Panc1 (cell line): ENCODE measurements at regions of chr1 and their contacts with region 1.

Region 1: DNA sequence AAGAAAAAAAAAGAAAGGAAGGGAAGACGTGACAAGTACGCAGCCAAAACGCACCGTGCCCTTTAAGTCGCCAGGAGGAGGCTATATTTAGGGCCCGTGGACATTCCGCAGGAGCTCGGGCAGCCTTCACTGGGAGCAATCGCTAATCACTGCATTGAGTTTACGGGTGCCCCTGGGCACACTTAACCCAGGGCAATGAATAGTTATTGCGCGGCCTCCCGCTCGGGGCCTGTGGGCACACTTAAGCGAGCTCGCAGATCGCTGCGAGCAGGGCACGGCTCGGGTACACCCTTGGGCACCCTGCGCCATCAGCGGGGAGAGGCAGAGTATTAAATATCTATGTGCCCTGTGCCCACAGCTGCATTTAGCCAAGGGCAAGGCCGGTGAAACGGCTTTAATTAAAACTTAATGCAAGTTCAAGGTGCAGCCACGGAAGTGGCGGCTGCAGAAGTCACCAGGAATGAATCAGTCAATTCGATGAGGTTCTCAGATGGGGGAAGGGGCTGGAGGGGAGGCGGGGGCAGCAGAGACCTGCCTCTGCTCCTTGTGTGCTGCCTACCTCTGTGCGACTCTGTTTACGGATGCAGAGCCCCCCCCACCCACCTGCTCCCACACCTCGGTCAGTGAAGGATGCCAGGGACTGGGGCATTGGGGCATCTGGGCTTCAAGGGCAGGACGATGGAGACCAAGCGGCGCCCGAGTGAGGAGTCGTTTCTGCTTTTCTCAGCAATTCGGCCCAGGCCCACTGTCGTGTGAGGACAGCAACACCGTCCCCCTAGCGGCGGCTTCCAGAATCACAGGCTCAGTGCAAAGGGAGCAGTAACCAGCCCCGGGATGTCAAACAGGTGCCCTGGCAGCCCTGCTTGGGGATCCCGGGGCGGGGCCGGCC is 51.8 kb upstream of the TARDBP start:
- DNase-seq: peak; percentile 28
- ATAC-seq: peak; percentile 96
- H3K4me3 ChIP-seq: no peak overlapping the region
- H3K27ac ChIP-seq: no peak overlapping the region
- H3K4me1 ChIP-seq: no peaks in the 10 kb centered on the region
- H3K27me3 ChIP-seq: no peaks in the 10 kb centered on the region
- CTCF ChIP-seq: peak; percentile 96

Region 2: DNA sequence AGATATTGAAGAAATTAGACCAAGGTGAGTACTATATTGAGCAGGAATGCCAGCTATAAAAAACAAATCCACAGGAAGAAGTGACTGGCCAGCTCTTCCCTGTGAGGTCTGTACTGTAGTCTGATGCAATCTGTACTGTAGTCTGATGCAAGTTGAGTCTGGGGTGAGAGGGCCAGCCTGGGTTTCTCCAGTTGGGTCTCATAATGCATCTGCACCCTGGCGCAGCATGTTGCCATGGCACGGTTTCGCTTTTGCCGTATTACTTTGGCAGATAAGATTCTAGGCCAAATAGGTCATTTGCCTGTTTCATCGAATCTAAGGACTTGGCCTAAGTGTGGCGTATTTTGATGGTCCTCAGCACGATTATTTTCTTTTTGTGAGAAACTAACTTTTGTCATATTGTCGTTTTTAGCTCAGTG is 586.2 kb before region 1 on chr1:
- CTCF ChIA-PET with region 1: no interaction called
- POLR2A ChIA-PET with region 1: no interaction called
- in situ Hi-C with region 1: no loop called
- intact Hi-C with region 1: no loop called
- DNase-seq: no peak
- ATAC-seq: no peak
- H3K4me3 ChIP-seq: no peak overlapping the region
- H3K27ac ChIP-seq: no peak overlapping the region
- H3K4me1 ChIP-seq: no peaks in the 10 kb centered on the region
- H3K27me3 ChIP-seq: no peaks in the 10 kb centered on the region
- CTCF ChIP-seq: no peak

Region 3: GRCh38 chr1:11114966-11115365 is 154.3 kb after region 1 on chr1:
- CTCF ChIA-PET with region 1: interaction called, 12 read pairs
- POLR2A ChIA-PET with region 1: no interaction called
- in situ Hi-C with region 1: no loop called
- intact Hi-C with region 1: no loop called
- DNase-seq: no peak
- ATAC-seq: no peak
- H3K4me3 ChIP-seq: no peak overlapping the region
- H3K27ac ChIP-seq: no peak overlapping the region
- H3K4me1 ChIP-seq: no peaks in the 10 kb centered on the region
- H3K27me3 ChIP-seq: no peaks in the 10 kb centered on the region
- CTCF ChIP-seq: no peak